Left ventricle myocardium inferior (tissue), 1 donor: ENCODE measurements at regions of chr4 and their contacts with region 1.

Region 1: GRCh38 chr4:82930848-82931755 is 30.6 kb downstream of the THAP9 start:
- DNase-seq: no peak
- H3K4me3 ChIP-seq: no peak overlapping the region
- H3K27ac ChIP-seq: no peak overlapping the region
- H3K4me1 ChIP-seq: no peaks in the 10 kb centered on the region
- H3K27me3 ChIP-seq: no peaks in the 10 kb centered on the region
- CTCF ChIP-seq: no peak

Region 2: GRCh38 chr4:83043801-83044407 is 112.8 kb after region 1 on chr4:
- intact Hi-C with region 1: loop called (anchors 5 kb)
- DNase-seq: no peak
- H3K4me3 ChIP-seq: no peak overlapping the region
- H3K27ac ChIP-seq: no peak overlapping the region
- H3K4me1 ChIP-seq: peaks cover 32% of the 10 kb centered on the region
- H3K27me3 ChIP-seq: no peaks in the 10 kb centered on the region
- CTCF ChIP-seq: no peak